HCT116 (cell line): ENCODE measurements at regions of chr2 and their contacts with region 1.

Region 1: GRCh38 chr2:217510771-217511291 is 492.0 kb downstream of the TNS1 start:
- DNase-seq: peak; percentile 70
- ATAC-seq: peak; percentile 98
- H3K4me3 ChIP-seq: no peak overlapping the region
- H3K27ac ChIP-seq: no peak overlapping the region
- H3K4me1 ChIP-seq: peaks cover 0 to 3% of the 10 kb centered on the region in 2 experiments; a peak in 2 of 4 replicates
- H3K27me3 ChIP-seq: peaks cover 13% of the 10 kb centered on the region; the same call in 1 of the 2 replicates
- CTCF ChIP-seq: peak; percentile 69 to 85 (median 75)
- POLR2A ChIP-seq: no peak
- RAD21 ChIP-seq: peak; percentile 94

Region 2: GRCh38 chr2:216519154-216519762 is 991.6 kb before region 1 on chr2:
- CTCF ChIA-PET with region 1: interaction called, 6 read pairs
- POLR2A ChIA-PET with region 1: no interaction called
- RAD21 ChIA-PET with region 1: no interaction called
- intact Hi-C with region 1: loop called (anchors 2 kb)
- DNase-seq: peak; percentile 67
- ATAC-seq: peak; percentile 88
- H3K4me3 ChIP-seq: no peak overlapping the region
- H3K27ac ChIP-seq: no peak overlapping the region
- H3K4me1 ChIP-seq: no peaks in the 10 kb centered on the region
- H3K27me3 ChIP-seq: no peaks in the 10 kb centered on the region
- CTCF ChIP-seq: peak; percentile 67 to 80 (median 76); a peak in 5 of 6 replicates
- POLR2A ChIP-seq: no peak
- RAD21 ChIP-seq: peak; percentile 80

Region 3: DNA sequence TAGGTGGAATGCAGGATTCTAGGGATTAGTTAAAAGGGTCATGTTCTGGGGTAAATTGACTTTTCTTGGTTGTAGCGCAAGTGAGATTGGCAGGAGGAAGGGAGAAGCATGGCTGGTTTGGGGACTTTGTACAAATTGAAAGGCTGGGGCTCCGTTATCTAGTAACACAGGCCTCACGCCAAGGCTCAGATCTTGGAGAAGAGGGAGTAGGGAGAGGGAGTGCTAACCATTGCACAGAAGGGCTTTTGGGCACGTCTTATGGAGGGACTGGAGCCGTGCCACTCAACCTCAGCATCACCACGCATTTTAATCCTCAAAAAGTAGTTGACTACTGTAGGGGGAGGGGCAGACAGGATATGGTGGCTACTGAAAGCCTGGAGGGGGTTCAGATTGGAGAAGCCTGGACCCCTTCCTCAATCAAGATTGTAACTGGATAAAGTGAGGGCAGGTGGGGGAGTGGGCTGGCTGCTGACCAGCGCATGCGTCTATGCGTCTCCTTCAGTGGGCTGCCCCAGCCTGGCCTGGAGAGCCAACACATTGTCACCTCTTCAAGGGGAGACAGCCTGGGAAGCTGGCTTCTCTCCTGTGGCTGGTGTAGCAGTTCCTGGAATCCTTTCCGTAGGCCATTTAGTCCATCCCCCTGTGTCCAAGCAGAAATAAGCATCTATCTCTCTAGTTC is 829.7 kb before region 1 on chr2:
- CTCF ChIA-PET with region 1: interaction called, 27 read pairs
- POLR2A ChIA-PET with region 1: no interaction called
- RAD21 ChIA-PET with region 1: interaction called in 1 of 2 experiments, 5 read pairs
- intact Hi-C with region 1: loop called (anchors 1 kb)
- DNase-seq: no peak
- ATAC-seq: no peak
- H3K4me3 ChIP-seq: no peak overlapping the region
- H3K27ac ChIP-seq: no peak overlapping the region
- H3K4me1 ChIP-seq: peaks cover 10% of the 10 kb centered on the region in 2 experiments
- H3K27me3 ChIP-seq: no peaks in the 10 kb centered on the region
- CTCF ChIP-seq: no peak
- POLR2A ChIP-seq: no peak
- RAD21 ChIP-seq: no peak

Region 4: GRCh38 chr2:216687646-216688045 is 823.2 kb before region 1 on chr2:
- CTCF ChIA-PET with region 1: interaction called, 27 read pairs
- POLR2A ChIA-PET with region 1: no interaction called
- RAD21 ChIA-PET with region 1: interaction called in 1 of 2 experiments, 5 read pairs
- intact Hi-C with region 1: loop called (anchors 1 kb)
- DNase-seq: peak; percentile 26
- ATAC-seq: peak; percentile 72
- H3K4me3 ChIP-seq: no peak overlapping the region
- H3K27ac ChIP-seq: no peak overlapping the region
- H3K4me1 ChIP-seq: peaks cover 0 to 27% of the 10 kb centered on the region in 2 experiments; a peak in 2 of 4 replicates
- H3K27me3 ChIP-seq: no peaks in the 10 kb centered on the region
- CTCF ChIP-seq: peak; percentile 40 to 87 (median 64); a peak in 5 of 6 replicates
- POLR2A ChIP-seq: no peak
- RAD21 ChIP-seq: peak; percentile 48

Region 5: DNA sequence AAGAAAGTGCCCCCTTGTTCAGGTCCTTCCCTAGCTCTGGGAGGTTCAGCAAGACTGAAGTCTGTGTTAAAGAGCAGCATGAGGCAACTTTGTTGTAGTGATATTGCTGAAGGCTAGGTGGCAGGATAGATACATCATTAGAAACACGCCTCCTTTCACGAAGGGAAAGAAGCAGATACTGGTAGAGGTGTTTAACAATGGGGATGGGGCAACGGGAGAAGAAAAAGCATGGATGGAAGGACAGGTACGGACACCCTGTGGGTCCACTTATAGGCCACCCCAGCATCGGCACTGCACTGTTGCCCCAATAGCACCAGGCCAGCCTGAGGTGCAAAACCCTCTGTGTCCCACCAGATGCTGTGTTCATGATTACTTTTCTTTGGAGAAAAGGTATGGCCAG is 811.9 kb before region 1 on chr2:
- CTCF ChIA-PET with region 1: interaction called, 10 read pairs
- POLR2A ChIA-PET with region 1: no interaction called
- RAD21 ChIA-PET with region 1: no interaction called
- intact Hi-C with region 1: loop called (anchors 1 kb)
- DNase-seq: peak; percentile 48
- ATAC-seq: peak; percentile 80
- H3K4me3 ChIP-seq: no peak overlapping the region
- H3K27ac ChIP-seq: no peak overlapping the region
- H3K4me1 ChIP-seq: peaks cover 20 to 30% of the 10 kb centered on the region in 2 experiments
- H3K27me3 ChIP-seq: peaks cover 22% of the 10 kb centered on the region; the same call in 1 of the 2 replicates
- CTCF ChIP-seq: peak; percentile 57 to 74 (median 67); a peak in 5 of 6 replicates
- POLR2A ChIP-seq: no peak
- RAD21 ChIP-seq: peak; percentile 88

Region 6: GRCh38 chr2:217166241-217166850 is 344.5 kb before region 1 on chr2:
- CTCF ChIA-PET with region 1: interaction called, 16 read pairs
- POLR2A ChIA-PET with region 1: interaction called, 3 read pairs
- RAD21 ChIA-PET with region 1: interaction called, 4 to 5 read pairs
- intact Hi-C with region 1: loop called (anchors 10 kb)
- DNase-seq: peak; percentile 32
- ATAC-seq: peak; percentile 76
- H3K4me3 ChIP-seq: no peak overlapping the region
- H3K27ac ChIP-seq: no peak overlapping the region
- H3K4me1 ChIP-seq: peaks cover 0 to 6% of the 10 kb centered on the region in 2 experiments; a peak in 2 of 4 replicates
- H3K27me3 ChIP-seq: peaks cover 27% of the 10 kb centered on the region
- CTCF ChIP-seq: peak; percentile 49 to 65 (median 61); a peak in 5 of 6 replicates
- POLR2A ChIP-seq: no peak
- RAD21 ChIP-seq: peak; percentile 74

Region 7: GRCh38 chr2:217215877-217216276 is 295.0 kb before region 1 on chr2:
- CTCF ChIA-PET with region 1: no interaction called
- POLR2A ChIA-PET with region 1: no interaction called
- RAD21 ChIA-PET with region 1: no interaction called
- intact Hi-C with region 1: no loop called
- DNase-seq: no peak
- ATAC-seq: no peak
- H3K4me3 ChIP-seq: no peak overlapping the region
- H3K27ac ChIP-seq: no peak overlapping the region
- H3K4me1 ChIP-seq: no peaks in the 10 kb centered on the region
- H3K27me3 ChIP-seq: peaks cover 61% of the 10 kb centered on the region
- CTCF ChIP-seq: no peak
- POLR2A ChIP-seq: no peak
- RAD21 ChIP-seq: no peak

Region 8: GRCh38 chr2:217387911-217388417 is 122.9 kb before region 1 on chr2:
- CTCF ChIA-PET with region 1: no interaction called
- POLR2A ChIA-PET with region 1: no interaction called
- RAD21 ChIA-PET with region 1: no interaction called
- intact Hi-C with region 1: no loop called
- DNase-seq: no peak
- ATAC-seq: no peak
- H3K4me3 ChIP-seq: no peak overlapping the region
- H3K27ac ChIP-seq: no peak overlapping the region
- H3K4me1 ChIP-seq: no peaks in the 10 kb centered on the region
- H3K27me3 ChIP-seq: peaks cover 39% of the 10 kb centered on the region
- CTCF ChIP-seq: no peak
- POLR2A ChIP-seq: no peak
- RAD21 ChIP-seq: no peak

Region 9: GRCh38 chr2:217650716-217651360 is 140.0 kb after region 1 on chr2:
- CTCF ChIA-PET with region 1: interaction called, 14 read pairs
- POLR2A ChIA-PET with region 1: no interaction called
- RAD21 ChIA-PET with region 1: no interaction called
- intact Hi-C with region 1: no loop called
- DNase-seq: peak; percentile 60
- ATAC-seq: peak; percentile 87
- H3K4me3 ChIP-seq: no peak overlapping the region
- H3K27ac ChIP-seq: no peak overlapping the region
- H3K4me1 ChIP-seq: peaks cover 7 to 21% of the 10 kb centered on the region in 2 experiments; a peak in 3 of 4 replicates
- H3K27me3 ChIP-seq: no peaks in the 10 kb centered on the region
- CTCF ChIP-seq: peak; percentile 57 to 93 (median 82); a peak in 5 of 6 replicates
- POLR2A ChIP-seq: no peak
- RAD21 ChIP-seq: peak; percentile 60